Activated T-helper 1 cell treated with anti-CD3 and anti-CD28 coated beads, Interleukin-12 subunit alpha, Interleukin-12 subunit beta, Interleukin-2, Interleukin-4 antibody, amounts not matched to agents 30 ng/mL and 10 ng/mL and 1 ng/mL, durations not matched to agents 14 hours and 24 hours and 36 hours (primary cell): ENCODE measurements at regions of chr2 and their contacts with region 1.

Region 1: DNA sequence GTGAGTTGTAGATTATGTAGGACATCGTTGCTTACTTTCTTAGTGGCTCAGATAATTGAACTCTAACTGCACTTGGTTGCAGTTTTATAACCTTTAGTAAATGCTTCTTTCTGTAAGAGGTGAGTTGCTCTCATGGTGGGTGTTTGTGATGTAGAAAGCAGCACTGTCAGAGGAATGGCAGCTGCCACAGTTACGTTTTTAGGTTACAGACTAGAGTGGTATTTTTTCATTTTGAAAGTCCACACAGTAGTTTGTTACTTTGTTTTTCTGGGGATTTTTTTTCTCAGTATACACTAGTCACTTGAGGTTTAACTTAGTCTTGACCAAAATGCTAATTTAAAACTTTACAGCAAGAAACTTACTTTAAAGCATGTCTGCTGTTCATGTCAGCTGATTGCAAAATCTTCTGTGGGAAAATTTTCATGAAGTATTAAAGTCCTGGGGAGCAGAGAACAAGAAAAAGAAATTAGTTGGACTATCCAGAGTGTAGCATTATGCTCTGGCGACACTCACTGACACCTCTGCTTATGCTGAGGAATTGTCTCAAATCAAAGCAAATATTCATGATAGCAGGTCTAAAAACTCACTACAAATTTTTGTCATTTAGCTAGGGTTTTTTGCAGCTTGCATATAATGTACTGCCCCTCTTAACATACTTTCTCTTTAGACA is 14.8 kb downstream of the AFTPH start:
- DNase-seq: no peak
- H3K4me3 Mint-ChIP-seq: peak overlapping the region; percentile 45
- H3K27ac Mint-ChIP-seq: peak overlapping the region; percentile 71
- H3K4me1 Mint-ChIP-seq: peaks cover 74% of the 10 kb centered on the region
- H3K27me3 Mint-ChIP-seq: no peaks in the 10 kb centered on the region

Region 2: GRCh38 chr2:64554117-64554516 is 15.2 kb after region 1 on chr2:
- intact Hi-C with region 1: loop called (anchors 2 kb)
- DNase-seq: no peak
- H3K4me3 Mint-ChIP-seq: no peak overlapping the region
- H3K27ac Mint-ChIP-seq: no peak overlapping the region
- H3K4me1 Mint-ChIP-seq: peaks cover 14% of the 10 kb centered on the region
- H3K27me3 Mint-ChIP-seq: no peaks in the 10 kb centered on the region

Region 3: DNA sequence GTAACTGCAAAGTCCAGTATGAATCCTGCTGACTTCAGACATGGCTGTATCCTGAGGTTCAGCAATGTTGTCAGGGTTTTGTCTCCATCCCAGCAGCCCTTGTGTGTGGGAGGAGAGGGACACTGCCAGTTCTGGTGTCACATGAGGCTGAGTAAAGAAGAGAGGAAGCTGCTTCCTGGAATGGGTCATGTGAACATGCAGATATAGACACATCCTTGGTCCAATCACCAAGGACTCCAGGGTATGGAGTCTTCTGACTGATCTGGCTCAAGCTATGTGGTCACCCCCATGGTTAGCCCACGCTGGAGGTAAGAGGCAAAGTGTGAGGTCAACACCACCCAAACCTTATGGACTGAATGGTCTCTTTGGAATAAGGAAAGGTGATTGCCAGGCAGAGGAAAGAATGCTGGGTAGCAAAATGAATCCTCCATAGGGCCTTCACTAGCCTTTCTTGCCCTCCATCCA is 315.9 kb after region 1 on chr2:
- intact Hi-C with region 1: no loop called
- DNase-seq: no peak
- H3K4me3 Mint-ChIP-seq: no peak overlapping the region
- H3K27ac Mint-ChIP-seq: no peak overlapping the region
- H3K4me1 Mint-ChIP-seq: peaks cover 26% of the 10 kb centered on the region
- H3K27me3 Mint-ChIP-seq: peaks cover 4% of the 10 kb centered on the region

Region 4: GRCh38 chr2:65031341-65032018 is 492.6 kb after region 1 on chr2:
- intact Hi-C with region 1: no loop called
- DNase-seq: no peak
- H3K4me3 Mint-ChIP-seq: no peak overlapping the region
- H3K27ac Mint-ChIP-seq: no peak overlapping the region
- H3K4me1 Mint-ChIP-seq: peaks cover 22% of the 10 kb centered on the region
- H3K27me3 Mint-ChIP-seq: peaks cover 2% of the 10 kb centered on the region